Esophagus muscularis mucosa (tissue), 4 donors: ENCODE measurements at regions of chr4 and their contacts with region 1.

Region 1: DNA sequence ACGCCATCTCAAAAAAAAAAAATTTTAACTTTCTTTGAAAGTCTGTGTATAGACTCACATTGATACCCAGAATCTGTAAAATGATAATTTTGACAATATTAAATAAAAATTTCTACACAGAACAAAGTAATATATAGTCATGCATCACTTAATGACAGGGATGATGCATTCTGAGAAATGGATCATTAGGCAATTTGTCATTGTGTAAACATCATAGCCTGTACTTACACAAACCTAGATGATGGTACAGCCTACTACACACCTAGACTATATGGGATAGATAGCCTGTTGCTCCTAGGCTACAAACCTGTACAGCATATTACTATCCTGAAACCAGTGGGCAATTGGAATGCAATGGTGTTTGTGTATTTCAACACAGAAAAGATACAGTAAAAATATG is 107.7 kb downstream of the BLTP1 start:
- DNase-seq: no peak
- H3K4me3 ChIP-seq: no peak overlapping the region
- H3K27ac ChIP-seq: no peak overlapping the region
- H3K4me1 ChIP-seq: no peaks in the 10 kb centered on the region
- H3K27me3 ChIP-seq: no peaks in the 10 kb centered on the region
- CTCF ChIP-seq: no peak
- EP300 ChIP-seq: no peak
- POLR2A ChIP-seq: no peak

Region 2: GRCh38 chr4:122356317-122356808 is 96.5 kb after region 1 on chr4:
- intact Hi-C with region 1: loop called (anchors 10 kb)
- DNase-seq: no peak
- H3K4me3 ChIP-seq: no peak overlapping the region
- H3K27ac ChIP-seq: no peak overlapping the region
- H3K4me1 ChIP-seq: no peaks in the 10 kb centered on the region
- H3K27me3 ChIP-seq: no peaks in the 10 kb centered on the region
- CTCF ChIP-seq: no peak
- EP300 ChIP-seq: no peak
- POLR2A ChIP-seq: no peak